Gastrocnemius medialis (tissue), 4 donors: ENCODE measurements at regions of chr13 and their contacts with region 1.

Region 1: GRCh38 chr13:102596147-102597028 is at the start of gene TPP2:
- DNase-seq: peak; percentile 99
- ATAC-seq: peak; percentile 88 to 89
- H3K4me3 ChIP-seq: peak within 1 kb of the TSS; percentile 63 to 99 (median 86)
- H3K27ac ChIP-seq: peak within 1 kb of the TSS; percentile 93 to 100 (median 96)
- H3K4me1 ChIP-seq: peaks cover 42 to 48% of the 10 kb centered on the region in 2 donors
- H3K27me3 ChIP-seq: no peaks in the 10 kb centered on the region
- CTCF ChIP-seq: peak in 1 of 5 experiments; percentile 8
- POLR2A ChIP-seq: peak; percentile 92
- total RNA-seq, gene TPP2: 38.2 to 78.2 (median 68.1) TPM

Region 2: DNA sequence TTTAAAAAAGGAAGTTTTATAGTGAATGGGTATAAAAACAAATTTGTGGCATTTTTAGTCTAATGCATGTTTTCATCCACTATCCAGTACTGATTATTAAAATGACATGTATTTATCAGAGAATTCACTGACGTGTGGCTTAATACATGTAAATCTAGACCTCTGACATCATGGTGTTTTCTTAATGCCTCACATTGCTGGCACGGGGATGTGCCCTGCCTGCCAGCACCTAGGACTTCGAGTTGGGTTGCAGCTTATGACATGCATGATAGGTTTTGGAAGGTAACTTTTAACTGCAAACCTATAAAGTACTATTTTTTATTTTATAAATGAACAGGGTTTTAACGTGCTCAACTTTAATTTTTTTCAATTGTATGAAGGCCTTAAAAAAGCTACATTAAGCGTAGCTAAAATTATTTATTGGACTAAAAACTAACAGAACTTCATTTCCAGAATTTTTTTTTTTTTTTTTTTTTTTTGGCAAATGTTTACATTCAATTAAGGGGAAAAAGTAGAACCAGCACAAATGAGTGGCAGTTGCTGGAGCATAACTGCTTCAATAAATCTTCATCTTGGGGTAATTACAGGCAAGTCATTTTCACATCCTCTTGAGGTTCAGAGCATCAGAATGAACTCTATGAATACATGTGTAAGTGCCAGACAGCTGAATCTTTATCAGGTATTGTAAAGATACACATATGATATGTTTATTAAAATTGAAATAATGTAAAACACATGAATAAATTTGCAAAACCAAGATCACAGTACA is 82.1 kb after region 1 on chr13:
- in situ Hi-C with region 1: no loop called
- intact Hi-C with region 1: loop called (anchors 5 kb)
- DNase-seq: peak in 1 of 2 donors; percentile 64
- ATAC-seq: peak; percentile 60 to 62
- H3K4me3 ChIP-seq: no peak overlapping the region
- H3K27ac ChIP-seq: peak overlapping the region; percentile 67 to 80 (median 68)
- H3K4me1 ChIP-seq: peaks cover 32 to 37% of the 10 kb centered on the region in 2 donors
- H3K27me3 ChIP-seq: no peaks in the 10 kb centered on the region
- CTCF ChIP-seq: no peak
- POLR2A ChIP-seq: no peak

Region 3: DNA sequence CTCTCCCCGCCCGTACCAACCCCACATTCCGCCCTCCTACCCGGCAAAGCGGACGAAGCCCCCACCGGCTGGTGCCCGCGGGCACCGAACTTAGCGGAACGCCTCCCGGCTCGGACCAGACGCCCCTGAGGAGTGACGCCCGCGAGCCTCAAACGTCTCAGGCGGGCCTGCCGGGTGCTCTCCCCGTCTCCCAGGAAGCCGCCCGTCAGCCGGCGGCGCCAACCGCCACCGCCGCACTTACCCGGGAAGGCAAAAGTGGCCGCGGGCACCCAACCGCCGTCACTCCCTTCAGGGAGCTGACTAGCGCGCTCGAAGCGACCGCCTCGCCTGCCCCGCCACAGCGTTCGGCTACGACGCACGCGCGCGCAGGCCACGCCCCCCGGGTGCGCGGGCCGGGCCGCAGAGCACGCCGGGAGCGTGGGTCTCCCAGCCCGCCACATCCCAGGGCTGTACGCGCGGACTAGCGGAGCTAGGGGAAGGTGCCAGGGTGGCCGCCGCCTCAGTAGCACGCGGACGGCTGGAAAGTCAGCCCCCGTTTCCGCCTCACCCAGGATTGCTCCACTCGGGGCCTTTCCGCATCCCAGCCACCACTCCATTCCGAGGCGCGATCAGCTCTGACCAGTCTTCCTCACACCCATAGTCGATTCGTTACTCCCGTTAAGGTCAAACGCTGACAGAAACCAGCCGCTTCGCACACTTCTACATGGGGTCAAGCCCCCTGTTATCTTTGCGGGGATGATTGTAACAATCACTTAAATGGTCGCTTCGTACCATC is 177.2 kb after region 1 on chr13 and contains the start of gene TEX30:
- in situ Hi-C with region 1: no loop called
- intact Hi-C with region 1: loop called (anchors 2 kb)
- DNase-seq: peak; percentile 50 to 73
- ATAC-seq: peak; percentile 96
- H3K4me3 ChIP-seq: peak within 1 kb of the TSS; percentile 72 to 91 (median 74)
- H3K27ac ChIP-seq: peak within 1 kb of the TSS; percentile 80 to 85 (median 80)
- H3K4me1 ChIP-seq: peaks cover 7 to 9% of the 10 kb centered on the region in 2 donors
- H3K27me3 ChIP-seq: no peaks in the 10 kb centered on the region
- CTCF ChIP-seq: no peak
- POLR2A ChIP-seq: peak; percentile 81 to 86
- total RNA-seq, gene TEX30: 3.5 to 11.6 (median 10.2) TPM